ENCODE measurements at regions of chr2 and their contacts with region 1.

Region 1: DNA sequence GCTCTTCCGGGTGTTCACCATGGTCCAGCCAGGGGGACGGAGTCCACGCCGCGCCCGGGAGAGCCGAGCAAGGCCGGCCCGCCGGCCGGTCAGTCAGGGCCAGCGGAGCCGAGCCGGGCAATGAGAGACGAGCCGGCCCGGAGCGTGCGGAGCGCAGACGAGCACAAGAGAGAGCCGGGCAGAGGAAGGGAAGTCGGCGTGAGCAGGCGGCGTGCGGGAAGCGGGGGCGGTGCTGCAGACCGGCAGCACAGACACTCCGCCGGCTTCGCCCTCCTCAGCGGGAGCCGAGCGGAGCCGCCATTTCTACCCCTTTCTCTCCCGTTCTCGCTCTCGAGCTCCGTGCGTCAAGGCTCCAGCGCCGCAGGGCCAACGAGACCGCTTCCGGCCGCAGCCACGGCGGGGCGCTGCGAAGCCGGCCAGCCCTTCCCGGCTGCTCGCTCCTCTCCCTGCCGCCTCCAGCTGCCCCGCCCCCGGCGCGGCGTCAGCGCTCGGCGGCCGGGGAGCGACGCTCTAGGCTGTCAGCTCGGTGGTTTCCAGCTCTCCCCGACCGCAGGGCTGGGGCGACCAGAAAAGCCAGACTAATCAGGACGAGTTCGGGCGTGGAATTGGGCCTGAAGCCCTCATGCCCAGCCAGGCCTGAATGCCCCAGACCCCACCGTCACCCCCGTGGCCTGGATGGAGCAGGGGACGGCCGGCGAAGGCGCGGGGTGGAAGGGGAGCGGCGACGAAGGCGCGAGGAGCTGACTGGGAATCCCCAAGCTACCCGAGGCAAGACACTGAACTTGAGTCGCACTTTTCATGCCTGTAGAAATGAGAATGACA is at the start of gene ATAD2B:
- DNase-seq: peak; percentile 76 to 95 (median 88)
- H3K4me3 ChIP-seq: peak within 1 kb of the TSS; percentile 73 to 98 (median 92)
- H3K27ac ChIP-seq: peak within 1 kb of the TSS; percentile 87 to 99 (median 97)
- H3K27me3 ChIP-seq: no peaks in the 10 kb centered on the region
- CTCF ChIP-seq: peak; percentile 54 to 97 (median 87)
- total RNA-seq, gene ATAD2B: 15.1 to 34.2 (median 24.3) TPM

Region 2: DNA sequence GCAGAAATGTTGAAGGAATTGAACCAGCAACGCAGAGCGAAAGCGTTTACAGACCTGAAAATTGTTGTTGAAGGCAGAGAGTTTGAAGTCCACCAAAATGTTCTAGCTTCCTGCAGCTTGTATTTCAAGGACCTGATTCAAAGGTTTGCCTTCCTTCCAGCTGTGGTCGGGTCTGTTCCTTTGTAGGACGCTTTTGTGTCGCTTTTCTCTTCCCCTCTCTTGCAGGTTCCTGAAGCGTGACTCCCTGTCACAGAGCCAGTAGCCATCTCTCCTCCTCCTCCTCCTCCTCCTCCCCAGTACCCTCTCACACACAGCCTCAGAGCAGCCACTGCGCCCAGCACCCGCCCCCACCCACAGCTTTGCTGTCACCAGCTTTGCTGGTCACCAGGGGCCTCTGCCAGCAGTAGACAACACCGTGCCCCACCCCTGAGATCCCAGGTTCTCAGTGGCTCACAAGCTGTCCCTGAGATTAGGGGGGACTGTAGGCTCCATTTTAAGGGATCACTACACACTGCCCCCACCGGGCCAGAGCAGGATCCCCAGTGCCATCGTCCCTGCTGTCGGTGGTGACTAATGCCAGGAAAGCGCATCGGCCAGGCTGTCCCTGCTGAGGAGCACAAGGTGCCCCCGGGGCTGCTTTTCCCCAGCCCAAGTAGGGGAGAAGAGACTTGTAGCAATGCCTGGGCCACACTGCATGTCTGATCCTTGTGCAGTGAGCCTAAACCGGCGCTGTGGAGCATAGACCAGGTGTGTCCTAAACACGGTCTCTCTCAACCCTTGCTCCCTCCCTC is 242.4 kb before region 1 on chr2:
- intact Hi-C with region 1: no loop called
- DNase-seq: no peak
- H3K4me3 ChIP-seq: no peak overlapping the region
- H3K27ac ChIP-seq: no peak overlapping the region
- H3K27me3 ChIP-seq: peaks cover 0 to 5% (median 0%) of the 10 kb centered on the region in 45 donors
- CTCF ChIP-seq: no peak

Region 3: GRCh38 chr2:23859983-23860382 is 67.0 kb before region 1 on chr2:
- intact Hi-C with region 1: no loop called
- DNase-seq: no peak
- H3K4me3 ChIP-seq: no peak overlapping the region
- H3K27ac ChIP-seq: no peak overlapping the region
- H3K27me3 ChIP-seq: no peaks in the 10 kb centered on the region
- CTCF ChIP-seq: no peak

Region 4: GRCh38 chr2:23939987-23940717 is 13.2 kb after region 1 on chr2 and contains the start of gene UBXN2A:
- intact Hi-C with region 1: loop called (anchors 1 kb)
- DNase-seq: peak; percentile 45 to 87 (median 63)
- H3K4me3 ChIP-seq: peak within 1 kb of the TSS; percentile 64 to 99 (median 87)
- H3K27ac ChIP-seq: peak within 1 kb of the TSS in 57 of 59 donors; percentile 23 to 94 (median 82)
- H3K27me3 ChIP-seq: no peaks in the 10 kb centered on the region
- CTCF ChIP-seq: peak in 4 of 56 donors; percentile 11 to 26 (median 18)
- total RNA-seq, gene UBXN2A: 14.4 to 32.7 (median 20.0) TPM

Region 5: GRCh38 chr2:24075915-24076848 is 149.2 kb after region 1 on chr2 and contains the start of gene SF3B6:
- intact Hi-C with region 1: loop called (anchors 2 kb)
- DNase-seq: peak; percentile 88 to 99 (median 97)
- H3K4me3 ChIP-seq: peak within 1 kb of the TSS; percentile 57 to 100 (median 91)
- H3K27ac ChIP-seq: peak within 1 kb of the TSS; percentile 46 to 96 (median 90)
- H3K27me3 ChIP-seq: no peaks in the 10 kb centered on the region
- CTCF ChIP-seq: peak in 48 of 56 donors; percentile 13 to 68 (median 30)
- total RNA-seq, gene SF3B6: 23.9 to 55.1 (median 35.5) TPM

Region 6: GRCh38 chr2:24228470-24228869 is 301.5 kb after region 1 on chr2:
- intact Hi-C with region 1: loop called in 1 of 2 experiments (anchors 10 kb)
- DNase-seq: no peak
- H3K4me3 ChIP-seq: no peak overlapping the region
- H3K27ac ChIP-seq: peak overlapping the region in 36 of 59 donors; percentile 7 to 96 (median 64)
- H3K27me3 ChIP-seq: no peaks in the 10 kb centered on the region
- CTCF ChIP-seq: peak in 55 of 56 donors; percentile 17 to 82 (median 59)